Naive thymus-derived CD4-positive, alpha-beta T cell (primary cell): ENCODE measurements at regions of chr2 and their contacts with region 1.

Region 1: GRCh38 chr2:108927936-108928659 is 60.9 kb downstream of the EDAR start:
- DNase-seq: peak in 6 of 9 donors; percentile 33 to 59 (median 50)
- ATAC-seq: peak; percentile 38
- H3K4me3 ChIP-seq: no peak overlapping the region
- H3K4me3 Mint-ChIP-seq: no peak overlapping the region
- H3K27ac ChIP-seq: no peak overlapping the region
- H3K27ac Mint-ChIP-seq: peak overlapping the region in 5 of 9 donors; percentile 0 to 28 (median 4)
- H3K4me1 ChIP-seq: peaks cover 0 to 5% of the 10 kb centered on the region in 2 donors
- H3K4me1 Mint-ChIP-seq: peaks cover 2 to 34% (median 25%) of the 10 kb centered on the region in 7 donors
- H3K27me3 ChIP-seq: no peaks in the 10 kb centered on the region
- H3K27me3 Mint-ChIP-seq: no peaks in the 10 kb centered on the region

Region 2: GRCh38 chr2:108704871-108705270 is 223.2 kb before region 1 on chr2:
- CTCF ChIA-PET with region 1: no interaction called
- POLR2A ChIA-PET with region 1: no interaction called
- intact Hi-C with region 1: no loop called
- DNase-seq: no peak
- ATAC-seq: no peak
- H3K4me3 ChIP-seq: no peak overlapping the region
- H3K4me3 Mint-ChIP-seq: no peak overlapping the region
- H3K27ac ChIP-seq: no peak overlapping the region
- H3K27ac Mint-ChIP-seq: no peak overlapping the region
- H3K4me1 ChIP-seq: no peaks in the 10 kb centered on the region
- H3K4me1 Mint-ChIP-seq: peaks cover 0 to 4% (median 0%) of the 10 kb centered on the region in 7 donors
- H3K27me3 ChIP-seq: no peaks in the 10 kb centered on the region
- H3K27me3 Mint-ChIP-seq: peaks cover 0 to 14% (median 4%) of the 10 kb centered on the region in 5 donors

Region 3: DNA sequence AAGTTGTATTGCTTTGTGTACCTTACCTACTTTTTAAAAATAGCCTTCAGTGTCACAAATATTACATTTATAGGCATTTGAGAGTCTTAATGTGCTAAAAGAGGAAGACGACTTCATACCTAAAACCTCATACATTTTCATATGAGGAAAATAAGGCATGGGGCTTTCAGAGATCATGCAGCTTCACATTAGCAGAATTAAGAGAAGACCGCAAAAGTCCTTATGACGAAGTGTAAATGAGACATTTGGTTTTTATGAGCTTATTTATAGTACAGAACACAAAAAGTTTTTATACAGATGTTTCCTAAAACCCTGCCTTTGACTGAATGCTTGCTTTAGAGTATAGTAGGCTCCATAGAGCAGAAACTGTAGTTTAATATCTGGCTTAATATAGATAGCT is 151.6 kb before region 1 on chr2:
- CTCF ChIA-PET with region 1: no interaction called
- POLR2A ChIA-PET with region 1: no interaction called
- intact Hi-C with region 1: no loop called
- DNase-seq: no peak
- ATAC-seq: no peak
- H3K4me3 ChIP-seq: no peak overlapping the region
- H3K4me3 Mint-ChIP-seq: no peak overlapping the region
- H3K27ac ChIP-seq: no peak overlapping the region
- H3K27ac Mint-ChIP-seq: peak overlapping the region in 5 of 9 donors; percentile 5 to 79 (median 22)
- H3K4me1 ChIP-seq: no peaks in the 10 kb centered on the region
- H3K4me1 Mint-ChIP-seq: peaks cover 0 to 12% (median 0%) of the 10 kb centered on the region in 7 donors
- H3K27me3 ChIP-seq: no peaks in the 10 kb centered on the region
- H3K27me3 Mint-ChIP-seq: no peaks in the 10 kb centered on the region

Region 4: DNA sequence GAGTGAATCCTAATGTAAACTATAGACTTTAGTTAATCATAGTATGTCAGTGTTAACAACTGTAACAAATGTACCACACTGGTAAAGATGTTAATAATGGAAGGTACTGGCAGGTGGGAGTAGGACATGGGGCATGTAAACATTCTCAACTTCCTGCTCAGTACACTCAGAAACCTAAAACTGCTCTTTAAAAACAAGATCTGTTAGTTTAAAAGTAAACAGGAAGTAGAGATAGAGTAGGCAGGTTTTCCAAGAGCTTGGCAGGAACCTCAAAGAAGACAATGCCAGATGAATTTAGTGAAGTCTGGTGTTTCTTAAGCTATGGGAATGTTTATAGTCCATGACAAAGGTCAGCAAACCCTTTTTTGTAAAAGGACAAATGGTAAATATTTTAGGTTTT is 94.9 kb before region 1 on chr2:
- CTCF ChIA-PET with region 1: no interaction called
- POLR2A ChIA-PET with region 1: no interaction called
- intact Hi-C with region 1: no loop called
- DNase-seq: no peak
- ATAC-seq: no peak
- H3K4me3 ChIP-seq: no peak overlapping the region
- H3K4me3 Mint-ChIP-seq: peak overlapping the region in 1 of 10 donors; percentile 59
- H3K27ac ChIP-seq: no peak overlapping the region
- H3K27ac Mint-ChIP-seq: peak overlapping the region in 6 of 9 donors; percentile 3 to 85 (median 34)
- H3K4me1 ChIP-seq: peaks cover 0 to 4% of the 10 kb centered on the region in 2 donors
- H3K4me1 Mint-ChIP-seq: peaks cover 6 to 19% (median 10%) of the 10 kb centered on the region in 7 donors
- H3K27me3 ChIP-seq: no peaks in the 10 kb centered on the region
- H3K27me3 Mint-ChIP-seq: no peaks in the 10 kb centered on the region

Region 5: GRCh38 chr2:108855194-108855593 is 72.9 kb before region 1 on chr2:
- CTCF ChIA-PET with region 1: interaction called, 7 read pairs
- POLR2A ChIA-PET with region 1: no interaction called
- intact Hi-C with region 1: loop called in 1 of 2 experiments (anchors 1 kb)
- DNase-seq: peak in 6 of 9 donors; percentile 27 to 66 (median 54)
- ATAC-seq: peak; percentile 85
- H3K4me3 ChIP-seq: no peak overlapping the region
- H3K4me3 Mint-ChIP-seq: no peak overlapping the region
- H3K27ac ChIP-seq: no peak overlapping the region
- H3K27ac Mint-ChIP-seq: no peak overlapping the region
- H3K4me1 ChIP-seq: no peaks in the 10 kb centered on the region
- H3K4me1 Mint-ChIP-seq: peaks cover 0 to 8% (median 4%) of the 10 kb centered on the region in 7 donors
- H3K27me3 ChIP-seq: no peaks in the 10 kb centered on the region
- H3K27me3 Mint-ChIP-seq: no peaks in the 10 kb centered on the region

Region 6: GRCh38 chr2:108960006-108960405 is 31.9 kb after region 1 on chr2:
- CTCF ChIA-PET with region 1: interaction called, 11 read pairs
- POLR2A ChIA-PET with region 1: interaction called, 4 read pairs
- intact Hi-C with region 1: loop called in 1 of 2 experiments (anchors 2 kb)
- DNase-seq: no peak
- ATAC-seq: no peak
- H3K4me3 ChIP-seq: no peak overlapping the region
- H3K4me3 Mint-ChIP-seq: peak overlapping the region in 8 of 10 donors; percentile 13 to 89 (median 59)
- H3K27ac ChIP-seq: no peak overlapping the region
- H3K27ac Mint-ChIP-seq: peak overlapping the region in 8 of 9 donors; percentile 78 to 98 (median 94)
- H3K4me1 ChIP-seq: peaks cover 10 to 76% of the 10 kb centered on the region in 2 donors
- H3K4me1 Mint-ChIP-seq: peaks cover 10 to 90% (median 85%) of the 10 kb centered on the region in 7 donors
- H3K27me3 ChIP-seq: no peaks in the 10 kb centered on the region
- H3K27me3 Mint-ChIP-seq: no peaks in the 10 kb centered on the region

Region 7: DNA sequence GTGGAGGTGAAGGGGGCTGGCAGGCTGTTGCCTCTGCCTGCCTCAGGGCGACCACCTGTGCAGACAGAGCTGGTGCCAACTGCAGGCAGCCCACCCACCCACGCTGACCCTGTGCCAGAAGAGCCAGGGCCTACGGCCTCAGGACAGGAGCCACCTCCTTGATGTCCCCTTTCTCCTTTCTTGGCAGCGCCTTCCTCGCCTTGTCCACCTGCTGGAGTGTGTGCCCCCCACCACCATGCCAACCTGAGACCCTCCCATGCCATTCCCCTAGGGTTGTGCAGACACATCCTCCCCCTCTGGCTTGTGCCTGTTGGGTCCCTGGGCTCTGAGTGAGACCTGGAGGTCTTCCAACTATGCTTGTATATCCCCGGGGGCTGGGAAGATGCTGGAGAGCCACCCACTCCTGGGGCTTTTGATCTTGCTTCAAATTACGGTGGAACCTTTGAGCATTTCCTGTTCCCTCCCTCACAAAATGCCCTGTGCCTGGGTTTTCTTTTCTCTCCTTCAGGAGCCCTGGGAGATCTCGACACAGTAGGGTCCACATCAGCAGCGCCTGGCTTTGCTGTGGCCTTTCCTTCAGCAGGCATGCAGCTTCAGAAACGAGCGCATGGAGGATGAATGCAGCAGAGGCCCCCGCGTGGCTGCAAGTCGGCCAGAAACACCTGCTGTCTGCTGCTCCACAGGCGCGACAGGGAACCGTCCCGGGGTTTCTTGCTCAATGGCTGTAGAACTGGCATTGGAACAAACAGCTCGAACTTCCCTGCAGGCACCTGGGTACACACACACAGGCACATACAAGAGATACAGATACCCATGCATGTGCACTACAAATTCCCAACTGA is 135.0 kb after region 1 on chr2:
- CTCF ChIA-PET with region 1: no interaction called
- POLR2A ChIA-PET with region 1: no interaction called
- intact Hi-C with region 1: loop called in 1 of 2 experiments (anchors 1 kb)
- DNase-seq: peak in 5 of 9 donors; percentile 17 to 37 (median 22)
- ATAC-seq: no peak
- H3K4me3 ChIP-seq: no peak overlapping the region
- H3K4me3 Mint-ChIP-seq: peak overlapping the region in 9 of 10 donors; percentile 5 to 62 (median 56)
- H3K27ac ChIP-seq: no peak overlapping the region
- H3K27ac Mint-ChIP-seq: peak overlapping the region in 7 of 9 donors; percentile 30 to 74 (median 62)
- H3K4me1 ChIP-seq: peaks cover 0 to 13% of the 10 kb centered on the region in 2 donors
- H3K4me1 Mint-ChIP-seq: peaks cover 11 to 61% (median 46%) of the 10 kb centered on the region in 7 donors
- H3K27me3 ChIP-seq: no peaks in the 10 kb centered on the region
- H3K27me3 Mint-ChIP-seq: peaks cover 0 to 4% (median 0%) of the 10 kb centered on the region in 5 donors

Region 8: DNA sequence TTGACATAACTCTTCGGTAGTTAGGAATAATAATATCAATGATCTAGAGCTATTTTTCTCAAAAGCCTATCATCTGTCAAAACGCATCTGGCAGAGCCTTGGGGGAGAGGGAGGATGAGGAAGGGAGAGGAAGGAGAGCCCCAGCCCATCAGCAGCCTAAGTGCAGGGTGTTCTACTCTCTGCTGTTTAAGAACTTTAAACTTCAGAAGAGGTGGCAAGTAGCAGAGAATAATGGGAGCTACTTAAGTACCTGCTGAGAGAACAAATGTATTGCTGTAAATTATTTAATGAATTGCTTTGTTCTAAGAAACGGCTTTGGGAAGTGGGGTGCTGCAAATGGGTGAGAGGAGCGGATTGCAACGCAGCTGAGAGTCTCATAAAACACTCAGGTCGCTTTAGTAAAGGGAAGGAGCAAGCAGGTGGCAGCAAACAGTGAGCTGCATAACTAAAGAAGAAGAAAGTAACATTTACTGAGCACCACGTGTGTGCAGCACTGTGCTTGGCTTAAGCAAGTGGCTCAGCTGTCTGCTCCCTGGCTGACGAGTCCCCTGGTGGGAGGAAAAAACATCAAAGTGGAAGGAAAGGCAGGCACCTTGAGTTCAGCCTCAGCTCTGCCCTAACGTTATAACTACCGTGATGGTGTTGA is 174.6 kb after region 1 on chr2:
- CTCF ChIA-PET with region 1: interaction called, 4 read pairs
- POLR2A ChIA-PET with region 1: no interaction called
- intact Hi-C with region 1: loop called in 1 of 2 experiments (anchors 1 kb)
- DNase-seq: peak in 7 of 9 donors; percentile 17 to 45 (median 33)
- ATAC-seq: peak; percentile 57
- H3K4me3 ChIP-seq: no peak overlapping the region
- H3K4me3 Mint-ChIP-seq: peak overlapping the region in 8 of 10 donors; percentile 33 to 74 (median 64)
- H3K27ac ChIP-seq: no peak overlapping the region
- H3K27ac Mint-ChIP-seq: peak overlapping the region in 8 of 9 donors; percentile 21 to 87 (median 66)
- H3K4me1 ChIP-seq: peaks cover 0 to 13% of the 10 kb centered on the region in 2 donors
- H3K4me1 Mint-ChIP-seq: peaks cover 4 to 41% (median 36%) of the 10 kb centered on the region in 7 donors
- H3K27me3 ChIP-seq: no peaks in the 10 kb centered on the region
- H3K27me3 Mint-ChIP-seq: peaks cover 0 to 18% (median 0%) of the 10 kb centered on the region in 5 donors

Region 9: DNA sequence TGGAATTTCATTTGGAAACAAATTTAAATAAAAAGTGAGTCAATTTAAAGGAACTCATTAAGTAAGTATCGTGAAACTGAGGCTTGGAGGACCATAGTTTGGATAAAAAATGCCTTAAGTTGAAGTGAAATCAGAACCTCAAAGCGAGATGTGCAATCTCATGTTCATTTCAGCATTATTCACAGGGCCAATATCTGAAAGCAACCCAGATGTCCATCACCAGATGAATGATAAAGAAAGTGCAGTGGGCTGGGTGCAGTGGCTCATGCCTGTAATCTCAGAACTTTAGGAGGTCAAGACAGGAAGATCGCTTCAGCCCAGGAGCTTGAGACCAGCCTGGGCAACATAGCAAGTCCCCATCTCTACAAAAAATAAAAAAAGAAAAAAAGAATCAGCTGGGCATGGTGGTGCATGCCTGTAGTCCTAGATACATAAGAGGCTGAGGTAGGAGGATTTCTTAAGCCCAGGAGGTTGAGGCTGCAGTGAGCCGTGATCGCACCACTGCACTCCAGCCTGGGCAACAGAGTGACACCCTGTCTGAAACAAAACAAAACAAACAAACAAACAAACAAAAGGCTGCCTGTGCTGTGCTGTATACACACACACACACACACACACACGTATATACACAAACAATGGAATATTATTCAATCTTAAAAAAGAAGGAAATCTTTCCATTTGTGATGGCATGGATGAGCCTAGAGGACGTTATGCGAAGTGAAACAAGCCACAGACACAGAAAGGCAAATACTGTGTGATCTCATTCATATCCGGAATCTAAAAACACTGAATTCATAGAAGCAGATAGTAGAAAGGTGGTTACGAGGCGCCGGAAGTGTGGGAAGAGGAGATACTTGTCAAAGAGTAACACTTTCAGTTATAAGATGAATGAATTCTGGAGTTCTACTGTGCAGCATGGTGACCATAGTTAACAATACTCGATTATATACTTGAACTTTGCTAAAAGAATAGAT is 215.4 kb after region 1 on chr2:
- CTCF ChIA-PET with region 1: no interaction called
- POLR2A ChIA-PET with region 1: no interaction called
- intact Hi-C with region 1: loop called in 1 of 2 experiments (anchors 10 kb)
- DNase-seq: peak in 8 of 9 donors; percentile 60 to 82 (median 76)
- ATAC-seq: peak; percentile 86
- H3K4me3 ChIP-seq: peak overlapping the region; percentile 4
- H3K4me3 Mint-ChIP-seq: peak overlapping the region; percentile 39 to 80 (median 70)
- H3K27ac ChIP-seq: peak overlapping the region; percentile 37
- H3K27ac Mint-ChIP-seq: peak overlapping the region; percentile 6 to 92 (median 84)
- H3K4me1 ChIP-seq: peaks cover 13 to 23% of the 10 kb centered on the region in 2 donors
- H3K4me1 Mint-ChIP-seq: peaks cover 20 to 62% (median 51%) of the 10 kb centered on the region in 7 donors
- H3K27me3 ChIP-seq: no peaks in the 10 kb centered on the region
- H3K27me3 Mint-ChIP-seq: peaks cover 0 to 52% (median 0%) of the 10 kb centered on the region in 5 donors

Region 10: GRCh38 chr2:109510136-109511028 is 582.3 kb after region 1 on chr2:
- CTCF ChIA-PET with region 1: interaction called, 3 read pairs
- POLR2A ChIA-PET with region 1: no interaction called
- intact Hi-C with region 1: loop called (anchors 1 kb)
- DNase-seq: peak; percentile 56 to 83 (median 74)
- ATAC-seq: peak; percentile 80
- H3K4me3 ChIP-seq: no peak overlapping the region
- H3K4me3 Mint-ChIP-seq: no peak overlapping the region
- H3K27ac ChIP-seq: no peak overlapping the region
- H3K27ac Mint-ChIP-seq: peak overlapping the region in 4 of 9 donors; percentile 22 to 46 (median 44)
- H3K4me1 ChIP-seq: peaks cover 0 to 2% of the 10 kb centered on the region in 2 donors
- H3K4me1 Mint-ChIP-seq: peaks cover 0 to 7% (median 4%) of the 10 kb centered on the region in 7 donors
- H3K27me3 ChIP-seq: no peaks in the 10 kb centered on the region
- H3K27me3 Mint-ChIP-seq: no peaks in the 10 kb centered on the region

Region 11: DNA sequence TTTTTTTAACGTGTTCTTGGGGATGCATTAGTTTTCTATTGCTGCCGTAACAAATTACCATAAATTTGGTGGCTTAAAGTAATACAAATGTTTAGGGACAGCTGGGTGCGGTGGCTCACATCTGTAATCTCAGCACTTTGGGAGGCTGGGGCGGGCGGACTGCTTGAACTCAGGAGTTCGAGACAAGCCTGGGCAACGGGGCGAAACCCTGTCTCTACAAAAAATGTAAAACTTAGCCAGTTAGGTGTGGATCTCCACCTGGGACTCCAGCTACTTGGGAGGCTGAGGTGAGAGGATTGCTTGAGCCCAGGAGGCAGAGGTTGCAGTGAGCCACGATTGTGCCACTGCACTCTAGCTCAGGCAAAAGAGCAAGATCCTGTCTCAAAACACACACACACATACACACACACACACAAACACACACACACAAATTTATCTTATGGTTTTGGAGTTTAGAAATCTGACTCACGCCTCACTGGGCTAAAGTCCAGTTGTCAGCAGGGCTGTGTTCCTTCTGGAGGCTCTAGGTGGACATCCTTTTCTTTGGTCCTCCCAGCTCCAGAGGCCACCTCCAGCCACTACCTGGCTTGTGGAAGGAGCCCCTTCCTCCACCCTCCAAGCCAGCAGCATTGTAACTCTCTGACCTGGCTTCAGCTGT is 609.6 kb after region 1 on chr2:
- CTCF ChIA-PET with region 1: no interaction called
- POLR2A ChIA-PET with region 1: no interaction called
- intact Hi-C with region 1: no loop called
- DNase-seq: no peak
- ATAC-seq: no peak
- H3K4me3 ChIP-seq: no peak overlapping the region
- H3K4me3 Mint-ChIP-seq: no peak overlapping the region
- H3K27ac ChIP-seq: no peak overlapping the region
- H3K27ac Mint-ChIP-seq: no peak overlapping the region
- H3K4me1 ChIP-seq: no peaks in the 10 kb centered on the region
- H3K4me1 Mint-ChIP-seq: no peaks in the 10 kb centered on the region
- H3K27me3 ChIP-seq: no peaks in the 10 kb centered on the region
- H3K27me3 Mint-ChIP-seq: peaks cover 0 to 29% (median 5%) of the 10 kb centered on the region in 5 donors